ENCODE measurements at regions of chr14 and their contacts with region 1.

Region 1: DNA sequence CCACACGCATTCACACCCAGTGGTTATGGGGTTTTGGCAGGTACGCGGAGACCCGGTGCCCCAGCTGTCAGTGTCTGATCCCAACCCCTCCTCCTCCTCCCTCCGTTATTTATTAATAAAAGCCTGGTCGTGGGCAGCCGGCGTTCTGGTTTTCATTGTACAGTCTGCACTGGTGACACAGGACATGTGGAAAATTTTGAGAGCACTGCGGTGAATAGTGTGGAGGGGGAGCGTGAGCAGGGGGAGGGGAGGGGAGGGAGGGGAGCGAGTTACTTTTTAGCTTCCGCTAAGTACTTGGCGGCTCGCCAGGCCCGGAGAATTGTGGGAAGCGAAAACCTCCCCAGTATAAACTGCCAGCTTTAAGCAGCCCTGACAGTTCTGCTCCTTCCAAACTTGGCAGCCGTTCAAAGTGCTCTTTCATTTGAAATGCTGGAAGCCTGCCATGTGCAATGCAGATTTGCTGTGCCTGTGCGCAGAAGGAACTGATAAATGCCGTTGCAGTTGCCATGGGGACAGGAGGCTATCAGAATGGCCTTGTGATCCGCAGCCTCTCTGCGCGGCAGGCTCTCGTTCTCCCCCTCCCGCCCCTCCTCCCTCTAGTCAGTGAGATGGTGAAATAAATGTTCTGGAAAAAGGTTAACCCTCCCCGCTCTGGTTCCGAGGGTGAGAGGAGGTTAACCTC is 11.7 kb upstream of the IRF2BPL start:
- DNase-seq: peak; percentile 99
- H3K4me3 Mint-ChIP-seq: peak overlapping the region; percentile 77
- H3K27ac Mint-ChIP-seq: peak overlapping the region; percentile 99
- H3K4me1 Mint-ChIP-seq: peaks cover 88% of the 10 kb centered on the region
- H3K27me3 Mint-ChIP-seq: no peaks in the 10 kb centered on the region

Region 2: GRCh38 chr14:76767681-76768656 is 272.2 kb before region 1 on chr14:
- CTCF ChIA-PET with region 1: no interaction called
- intact Hi-C with region 1: loop called (anchors 2 kb)
- DNase-seq: peak; percentile 91
- H3K4me3 Mint-ChIP-seq: peak overlapping the region; percentile 1
- H3K27ac Mint-ChIP-seq: peak overlapping the region; percentile 6
- H3K4me1 Mint-ChIP-seq: peaks cover 14% of the 10 kb centered on the region
- H3K27me3 Mint-ChIP-seq: peaks cover 21% of the 10 kb centered on the region

Region 3: DNA sequence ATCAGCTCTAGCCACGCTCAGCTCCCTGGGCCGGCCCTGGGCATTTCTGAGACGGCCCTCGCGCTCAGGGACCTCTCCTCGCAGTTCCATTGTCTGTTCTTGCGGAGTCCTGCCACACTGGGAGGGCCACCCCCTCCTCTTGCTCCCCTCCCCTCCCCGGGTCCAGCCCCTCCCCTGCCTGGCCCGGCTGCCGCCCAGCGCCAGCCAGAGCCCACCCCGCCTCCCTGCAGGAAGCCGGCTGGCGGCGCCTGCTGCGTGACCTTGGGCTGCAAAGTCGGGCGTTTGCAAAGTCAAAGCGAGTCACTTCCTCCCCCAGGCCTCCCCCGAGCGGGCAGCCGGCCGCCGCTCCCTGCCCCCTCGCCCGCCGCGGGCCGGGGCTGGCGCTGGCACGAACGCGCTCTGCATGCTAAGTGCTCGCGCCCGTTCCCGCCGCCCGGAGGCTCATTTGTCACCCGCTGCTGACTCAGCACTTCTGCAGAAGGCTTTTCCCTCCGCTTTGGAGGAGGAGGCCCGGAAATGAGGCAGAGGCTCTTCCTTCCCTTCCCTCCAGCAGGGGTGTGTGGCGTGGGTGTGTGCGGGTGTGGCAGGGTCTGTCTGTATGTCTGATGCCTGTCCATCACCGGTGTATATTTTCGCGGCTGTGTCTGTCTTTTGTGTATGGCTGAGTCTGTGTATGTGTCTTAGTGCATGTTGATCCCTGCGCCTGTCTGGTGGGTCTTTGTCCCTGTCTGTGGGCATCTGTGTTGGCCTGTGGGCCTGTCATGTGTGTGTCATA is 83.7 kb before region 1 on chr14:
- CTCF ChIA-PET with region 1: interaction called, 11 read pairs
- intact Hi-C with region 1: loop called (anchors 1 kb)
- DNase-seq: peak; percentile 98
- H3K4me3 Mint-ChIP-seq: peak overlapping the region; percentile 80
- H3K27ac Mint-ChIP-seq: peak overlapping the region; percentile 97
- H3K4me1 Mint-ChIP-seq: peaks cover 72% of the 10 kb centered on the region
- H3K27me3 Mint-ChIP-seq: no peaks in the 10 kb centered on the region

Region 4: DNA sequence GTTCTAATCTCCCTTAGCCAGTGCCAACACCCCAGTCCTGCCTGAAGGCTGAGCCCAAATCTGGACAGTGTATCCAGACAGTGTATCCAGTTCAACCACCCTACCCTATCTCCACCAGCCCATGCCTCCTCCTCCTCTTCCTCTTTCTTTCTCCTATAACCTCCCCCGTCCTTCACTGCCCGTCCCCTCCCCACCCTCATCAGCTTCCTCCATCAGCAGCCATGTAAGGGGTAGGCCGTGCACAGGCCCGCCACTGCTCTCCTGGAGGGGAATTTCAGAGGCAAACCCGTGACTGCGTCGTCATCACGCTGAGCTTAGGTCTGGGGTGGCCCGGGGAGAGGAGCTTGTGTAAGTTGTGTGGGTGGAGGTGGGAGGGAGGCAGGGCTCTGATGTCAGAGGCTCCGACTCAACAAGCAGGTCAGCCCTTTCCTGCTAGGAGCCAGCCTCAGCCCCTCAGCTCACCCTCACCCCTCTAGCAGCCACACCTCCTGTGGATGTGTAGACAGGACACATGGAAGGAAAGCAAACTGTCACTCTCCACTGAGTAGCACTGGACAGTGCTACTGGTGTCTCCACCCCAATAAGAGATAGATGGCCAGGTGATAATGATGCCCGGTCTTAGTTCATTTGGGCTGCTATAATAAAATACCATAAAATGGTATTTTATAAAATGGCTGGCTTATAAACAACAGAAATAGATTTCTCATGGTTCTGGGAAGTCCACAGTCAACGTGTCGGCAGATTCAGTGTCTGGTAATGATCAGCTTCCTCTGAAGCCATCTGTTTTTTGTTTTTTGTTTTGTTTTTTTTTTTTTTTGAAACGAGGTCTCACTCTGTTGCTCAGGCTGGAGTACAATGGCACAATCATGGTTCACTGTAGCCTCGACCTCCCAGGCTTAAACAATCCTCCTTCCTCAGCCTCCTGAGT is 62.1 kb before region 1 on chr14:
- CTCF ChIA-PET with region 1: interaction called, 3 read pairs
- intact Hi-C with region 1: loop called (anchors 1 kb)
- DNase-seq: peak; percentile 97
- H3K4me3 Mint-ChIP-seq: peak overlapping the region; percentile 71
- H3K27ac Mint-ChIP-seq: peak overlapping the region; percentile 95
- H3K4me1 Mint-ChIP-seq: peaks cover 28% of the 10 kb centered on the region
- H3K27me3 Mint-ChIP-seq: no peaks in the 10 kb centered on the region

Region 5: DNA sequence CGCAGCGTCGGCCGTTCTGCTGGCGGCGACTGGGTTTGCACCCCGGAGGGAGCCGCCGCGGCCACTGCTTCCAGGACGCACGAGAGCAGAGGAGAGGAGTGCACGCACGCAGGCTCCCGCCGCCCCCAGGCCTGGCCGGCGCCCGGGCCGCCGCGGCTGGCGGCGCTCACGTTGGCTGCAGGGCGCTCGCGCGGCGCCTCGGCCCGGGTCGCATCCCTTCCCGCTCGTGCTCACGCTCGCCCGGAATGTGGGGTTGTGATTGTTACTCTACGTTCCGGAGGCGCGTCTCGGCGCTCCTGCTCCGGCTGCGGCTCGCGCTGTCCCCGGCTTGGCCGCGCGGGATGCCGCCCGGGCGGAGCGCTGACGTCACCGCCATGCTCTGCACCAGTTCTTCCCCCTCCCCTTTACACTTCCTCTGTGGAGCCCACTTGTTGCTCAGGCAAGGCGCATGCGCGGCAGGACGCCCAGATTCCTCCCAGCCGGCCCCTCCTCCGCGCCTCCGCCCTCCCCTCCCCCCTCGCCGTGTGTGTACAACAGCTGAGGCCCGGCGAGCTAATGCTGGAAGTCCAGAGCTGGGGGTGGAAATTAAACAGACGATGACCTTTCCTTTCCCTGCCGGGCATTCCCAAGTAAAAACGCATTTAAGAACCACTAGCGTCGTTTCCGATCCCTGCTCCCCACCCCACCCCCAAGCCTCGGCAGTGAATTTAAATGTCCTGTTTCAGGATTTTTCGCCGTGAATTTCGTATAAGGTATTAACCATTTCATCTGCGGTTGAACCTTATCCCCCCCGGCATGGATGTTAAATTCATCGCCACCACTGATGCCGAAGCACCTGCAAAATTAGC is 11.6 kb before region 1 on chr14 and contains the start of gene IRF2BPL:
- CTCF ChIA-PET with region 1: interaction called, 11 read pairs
- intact Hi-C with region 1: loop called (anchors 1 kb)
- DNase-seq: peak; percentile 96
- H3K4me3 Mint-ChIP-seq: peak within 1 kb of the TSS; percentile 82
- H3K27ac Mint-ChIP-seq: peak within 1 kb of the TSS; percentile 94
- H3K4me1 Mint-ChIP-seq: peaks cover 57% of the 10 kb centered on the region
- H3K27me3 Mint-ChIP-seq: no peaks in the 10 kb centered on the region
- total RNA-seq, gene IRF2BPL: 34.8 to 35.2 TPM

Region 6: GRCh38 chr14:77158175-77158891 is 118.1 kb after region 1 on chr14:
- CTCF ChIA-PET with region 1: no interaction called
- intact Hi-C with region 1: no loop called
- DNase-seq: no peak
- H3K4me3 Mint-ChIP-seq: no peak overlapping the region
- H3K27ac Mint-ChIP-seq: no peak overlapping the region
- H3K4me1 Mint-ChIP-seq: no peaks in the 10 kb centered on the region
- H3K27me3 Mint-ChIP-seq: peaks cover 25% of the 10 kb centered on the region